ENCODE measurements at regions of chr16 and their contacts with region 1.

Region 1: GRCh38 chr16:53743149-53743566 is 39.2 kb downstream of the FTO start:
- DNase-seq: peak; percentile 28
- H3K4me3 ChIP-seq: no peak overlapping the region
- H3K27ac ChIP-seq: no peak overlapping the region
- H3K4me1 ChIP-seq: peaks cover 11% of the 10 kb centered on the region
- H3K27me3 ChIP-seq: no peaks in the 10 kb centered on the region
- CTCF ChIP-seq: peak; percentile 63 to 67
- POLR2A ChIP-seq: no peak

Region 2: GRCh38 chr16:53378138-53378537 is 365.0 kb before region 1 on chr16:
- CTCF ChIA-PET with region 1: no interaction called
- POLR2A ChIA-PET with region 1: no interaction called
- dilution Hi-C with region 1: no loop called
- intact Hi-C with region 1: no loop called
- DNase-seq: no peak
- H3K4me3 ChIP-seq: no peak overlapping the region
- H3K27ac ChIP-seq: no peak overlapping the region
- H3K4me1 ChIP-seq: no peaks in the 10 kb centered on the region
- H3K27me3 ChIP-seq: peaks cover 4 to 19% of the 10 kb centered on the region in 2 experiments
- CTCF ChIP-seq: no peak
- POLR2A ChIP-seq: no peak

Region 3: DNA sequence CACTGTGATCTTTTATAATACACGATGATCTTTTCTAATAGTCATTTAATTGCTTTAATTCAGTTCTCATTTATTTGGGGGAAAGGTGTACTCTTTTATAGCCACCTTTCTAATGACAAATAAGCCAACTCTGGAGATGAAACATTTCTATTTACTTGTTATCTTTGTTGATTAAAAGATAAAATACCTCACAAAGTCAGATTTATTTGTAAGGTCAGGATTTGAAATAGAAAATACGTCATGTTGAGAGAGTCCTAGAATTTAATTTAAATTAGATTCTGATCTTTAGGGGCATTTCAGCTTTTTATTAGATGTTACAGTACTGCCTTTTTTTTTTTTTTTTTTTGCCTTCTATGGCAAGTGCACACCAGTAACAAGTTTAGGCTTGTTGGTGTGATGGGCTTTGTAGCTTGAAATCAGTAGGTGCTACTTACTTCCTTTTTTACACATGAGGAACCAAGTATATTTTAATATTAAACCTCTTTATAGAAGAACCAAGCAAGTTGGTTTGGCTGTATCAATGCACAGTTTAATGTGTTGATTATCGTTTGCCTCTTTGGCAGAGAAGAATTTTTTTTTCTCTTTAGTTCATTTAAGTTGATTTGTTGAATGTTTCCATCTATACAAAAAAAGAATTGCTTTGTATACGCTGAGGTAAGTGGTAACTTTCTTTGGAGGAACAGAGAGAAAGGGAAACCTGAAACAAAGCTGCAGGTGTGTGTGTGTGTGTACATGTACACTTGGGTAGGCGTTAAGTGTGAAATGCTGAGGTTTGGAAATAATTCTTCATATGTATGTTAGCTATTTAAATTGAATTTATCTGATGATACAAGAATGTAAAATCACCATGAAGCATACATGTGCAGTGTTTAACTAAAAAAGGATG is 293.3 kb before region 1 on chr16:
- CTCF ChIA-PET with region 1: no interaction called
- POLR2A ChIA-PET with region 1: no interaction called
- dilution Hi-C with region 1: no loop called
- intact Hi-C with region 1: no loop called
- DNase-seq: no peak
- H3K4me3 ChIP-seq: no peak overlapping the region
- H3K27ac ChIP-seq: no peak overlapping the region
- H3K4me1 ChIP-seq: no peaks in the 10 kb centered on the region
- H3K27me3 ChIP-seq: no peaks in the 10 kb centered on the region
- CTCF ChIP-seq: no peak
- POLR2A ChIP-seq: no peak

Region 4: GRCh38 chr16:53703590-53704444 is 39.3 kb before region 1 on chr16 and contains the starts of genes FTO and RPGRIP1L:
- CTCF ChIA-PET with region 1: interaction called, 11 read pairs
- POLR2A ChIA-PET with region 1: no interaction called
- dilution Hi-C with region 1: no loop called
- intact Hi-C with region 1: no loop called
- DNase-seq: peak; percentile 100
- H3K4me3 ChIP-seq: peak within 1 kb of the TSS; percentile 42 to 88 (median 87)
- H3K27ac ChIP-seq: peak within 1 kb of the TSS; percentile 36
- H3K4me1 ChIP-seq: peaks cover 3% of the 10 kb centered on the region
- H3K27me3 ChIP-seq: no peaks in the 10 kb centered on the region
- CTCF ChIP-seq: no peak
- POLR2A ChIP-seq: no peak
- total RNA-seq, gene FTO: 77.8 and 87.1 TPM in 2 replicates
- total RNA-seq, gene RPGRIP1L: 9.7 and 13.2 TPM in 2 replicates

Region 5: DNA sequence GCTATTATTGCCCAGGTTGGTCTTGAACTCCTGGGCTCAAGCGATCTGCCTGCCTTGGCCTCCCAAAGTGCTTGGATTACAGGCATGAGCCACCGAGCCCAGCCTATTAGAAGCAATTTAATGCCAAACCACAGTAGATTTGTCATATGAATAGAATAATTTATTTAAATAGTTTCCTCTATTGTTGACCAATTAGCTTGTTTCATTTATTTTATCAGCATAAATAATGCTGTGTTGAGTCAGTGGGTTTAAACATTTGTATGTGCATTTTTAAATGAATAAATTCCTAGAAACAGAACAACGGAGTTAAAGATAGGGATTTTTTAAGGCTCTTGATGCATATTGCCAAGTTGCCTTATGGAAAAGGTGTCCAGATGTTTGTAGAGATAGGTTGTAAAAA is 12.5 kb before region 1 on chr16:
- CTCF ChIA-PET with region 1: interaction called, 14 read pairs
- POLR2A ChIA-PET with region 1: no interaction called
- dilution Hi-C with region 1: no loop called
- intact Hi-C with region 1: no loop called
- DNase-seq: no peak
- H3K4me3 ChIP-seq: no peak overlapping the region
- H3K27ac ChIP-seq: no peak overlapping the region
- H3K4me1 ChIP-seq: no peaks in the 10 kb centered on the region
- H3K27me3 ChIP-seq: no peaks in the 10 kb centered on the region
- CTCF ChIP-seq: no peak
- POLR2A ChIP-seq: no peak

Region 6: DNA sequence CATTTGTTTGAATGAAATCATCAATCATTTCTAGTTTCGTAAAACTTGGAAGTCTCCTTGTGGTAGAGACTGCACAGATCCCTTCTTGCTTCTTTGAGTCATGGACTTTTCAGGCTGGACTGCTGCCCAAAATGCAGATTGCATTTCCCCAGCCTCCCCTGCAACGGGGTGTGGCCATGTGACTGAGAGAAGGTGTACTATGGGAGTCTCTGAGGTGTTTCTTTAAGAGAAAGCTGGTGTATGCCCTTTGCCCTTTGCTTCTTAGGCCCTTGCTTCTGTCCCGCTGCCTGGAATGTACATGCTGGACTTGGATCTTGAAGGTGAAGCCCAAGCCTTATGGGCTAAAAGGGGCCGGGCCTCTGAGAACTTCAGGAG is 12.4 kb after region 1 on chr16:
- CTCF ChIA-PET with region 1: interaction called, 57 read pairs
- POLR2A ChIA-PET with region 1: no interaction called
- dilution Hi-C with region 1: no loop called
- intact Hi-C with region 1: no loop called
- DNase-seq: no peak
- H3K4me3 ChIP-seq: no peak overlapping the region
- H3K27ac ChIP-seq: no peak overlapping the region
- H3K4me1 ChIP-seq: no peaks in the 10 kb centered on the region
- H3K27me3 ChIP-seq: no peaks in the 10 kb centered on the region
- CTCF ChIP-seq: no peak
- POLR2A ChIP-seq: no peak

Region 7: GRCh38 chr16:53882310-53882709 is 139.2 kb after region 1 on chr16:
- CTCF ChIA-PET with region 1: no interaction called
- POLR2A ChIA-PET with region 1: no interaction called
- dilution Hi-C with region 1: no loop called
- intact Hi-C with region 1: no loop called
- DNase-seq: no peak
- H3K4me3 ChIP-seq: no peak overlapping the region
- H3K27ac ChIP-seq: no peak overlapping the region
- H3K4me1 ChIP-seq: no peaks in the 10 kb centered on the region
- H3K27me3 ChIP-seq: no peaks in the 10 kb centered on the region
- CTCF ChIP-seq: no peak
- POLR2A ChIP-seq: no peak

Region 8: GRCh38 chr16:54093281-54093680 is 350.1 kb after region 1 on chr16:
- CTCF ChIA-PET with region 1: no interaction called
- POLR2A ChIA-PET with region 1: no interaction called
- dilution Hi-C with region 1: no loop called
- intact Hi-C with region 1: no loop called
- DNase-seq: no peak
- H3K4me3 ChIP-seq: no peak overlapping the region
- H3K27ac ChIP-seq: no peak overlapping the region
- H3K4me1 ChIP-seq: no peaks in the 10 kb centered on the region
- H3K27me3 ChIP-seq: no peaks in the 10 kb centered on the region
- CTCF ChIP-seq: no peak
- POLR2A ChIP-seq: no peak

Region 9: DNA sequence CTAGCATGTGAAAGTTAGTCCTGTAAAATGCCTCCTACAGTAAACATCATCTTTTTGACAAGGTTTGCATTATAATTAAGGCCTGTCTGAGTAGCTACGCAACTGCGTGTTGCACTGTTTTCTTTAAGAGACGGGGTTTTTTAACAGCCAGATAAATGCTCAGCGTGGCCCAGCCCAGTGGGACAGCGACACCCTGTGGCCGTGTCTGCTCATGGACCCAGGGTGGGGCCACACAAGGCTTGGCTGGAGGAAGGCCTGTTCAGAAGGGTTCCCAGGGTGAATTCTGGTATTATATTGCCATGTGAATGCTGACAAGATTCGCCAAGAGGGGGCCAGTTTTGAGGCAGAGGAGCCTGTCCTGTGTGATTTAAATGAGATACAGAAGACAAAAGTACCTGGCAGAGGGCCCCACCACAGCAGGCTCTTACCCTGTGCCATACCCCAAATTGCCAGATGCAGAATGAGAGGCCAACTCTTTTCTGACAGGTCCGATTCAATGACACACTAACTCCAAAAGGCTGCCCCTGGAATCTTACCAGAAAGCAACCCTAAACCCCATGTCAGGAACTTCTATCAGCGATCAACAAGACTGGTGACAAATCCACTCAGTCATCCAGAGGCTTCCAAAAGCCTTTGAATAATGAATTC is 1514.9 kb after region 1 on chr16:
- CTCF ChIA-PET with region 1: interaction called, 11 read pairs
- POLR2A ChIA-PET with region 1: no interaction called
- dilution Hi-C with region 1: no loop called
- intact Hi-C with region 1: no loop called
- DNase-seq: peak; percentile 53
- H3K4me3 ChIP-seq: no peak overlapping the region
- H3K27ac ChIP-seq: no peak overlapping the region
- H3K4me1 ChIP-seq: no peaks in the 10 kb centered on the region
- H3K27me3 ChIP-seq: no peaks in the 10 kb centered on the region
- CTCF ChIP-seq: peak; percentile 74 to 76
- POLR2A ChIP-seq: no peak

Measured in endothelial cell of umbilical vein (primary cell).